Caco-2 (cell line): ENCODE measurements at regions of chr9 and their contacts with region 1.

Region 1: DNA sequence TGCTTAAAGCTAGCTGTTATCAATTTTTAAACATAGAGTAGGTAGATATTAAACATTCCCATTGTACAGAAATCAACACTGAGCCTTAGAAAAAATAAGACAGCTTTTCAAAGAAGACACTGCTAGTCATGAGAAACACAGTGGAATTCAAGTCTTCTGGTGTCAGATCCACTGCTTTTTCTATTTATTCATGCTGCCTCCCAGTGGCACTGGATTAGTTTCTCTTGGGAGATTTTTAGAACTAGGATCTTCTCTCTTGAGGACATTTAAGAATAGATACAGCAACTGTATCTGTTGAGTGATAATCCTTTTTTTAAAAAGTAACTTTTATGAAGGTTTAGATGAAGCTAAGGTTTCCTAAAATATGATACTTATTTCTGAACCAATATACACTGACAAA is 1635.4 kb upstream of the C9orf72 start:
- DNase-seq: no peak
- H3K4me3 ChIP-seq: no peak overlapping the region
- H3K4me3 Mint-ChIP-seq: no peak overlapping the region
- H3K27ac Mint-ChIP-seq: no peak overlapping the region
- H3K4me1 ChIP-seq: no peaks in the 10 kb centered on the region
- H3K4me1 Mint-ChIP-seq: peaks cover under 1% of the 10 kb centered on the region
- H3K27me3 ChIP-seq: no peaks in the 10 kb centered on the region
- H3K27me3 Mint-ChIP-seq: peaks cover 4% of the 10 kb centered on the region
- CTCF ChIP-seq: no peak

Region 2: DNA sequence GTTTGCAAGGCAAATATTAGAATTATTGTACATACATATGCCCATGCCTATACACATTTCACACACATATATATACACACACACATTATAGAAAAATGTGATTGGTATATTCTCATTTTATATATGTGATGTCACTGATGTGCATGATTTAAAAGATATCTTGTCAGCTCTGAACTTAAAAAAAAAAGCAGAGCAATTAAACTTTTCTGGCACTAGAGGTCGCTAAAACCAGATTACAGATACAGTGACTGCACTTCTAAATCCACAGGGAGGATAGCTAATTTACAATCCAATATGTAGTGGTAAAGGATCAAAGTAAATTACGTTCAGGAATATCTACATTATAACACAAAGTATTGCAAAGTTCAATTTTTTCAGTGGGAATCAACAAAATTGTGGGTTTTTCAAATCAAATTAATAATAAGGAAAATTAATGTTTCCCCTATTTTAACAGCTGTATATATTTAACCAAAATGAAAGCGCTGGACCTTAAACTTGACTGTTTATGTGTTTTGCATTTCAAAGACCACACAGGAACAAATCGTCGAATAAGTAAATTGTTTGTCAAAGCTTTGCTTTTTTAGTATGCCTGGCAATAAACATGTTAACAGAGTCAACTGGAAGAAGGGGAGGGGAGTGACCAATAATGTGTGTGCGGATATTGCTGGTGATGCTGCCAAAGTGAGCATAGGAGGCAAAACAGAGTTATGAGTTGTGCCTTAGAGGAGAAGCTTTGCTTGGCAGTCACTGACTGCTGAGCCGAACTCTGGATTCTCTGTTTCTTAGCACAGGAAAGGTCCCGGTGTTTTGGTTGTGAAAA is 434.0 kb before region 1 on chr9:
- CTCF ChIA-PET with region 1: no interaction called
- POLR2A ChIA-PET with region 1: no interaction called
- intact Hi-C with region 1: loop called (anchors 10 kb)
- DNase-seq: peak in 1 of 2 experiments; percentile 1
- H3K4me3 ChIP-seq: no peak overlapping the region
- H3K4me3 Mint-ChIP-seq: no peak overlapping the region
- H3K27ac Mint-ChIP-seq: no peak overlapping the region
- H3K4me1 ChIP-seq: no peaks in the 10 kb centered on the region
- H3K4me1 Mint-ChIP-seq: no peaks in the 10 kb centered on the region
- H3K27me3 ChIP-seq: no peaks in the 10 kb centered on the region
- H3K27me3 Mint-ChIP-seq: peaks cover 3% of the 10 kb centered on the region
- CTCF ChIP-seq: peak; percentile 34 to 38

Region 3: GRCh38 chr9:28841775-28842174 is 366.9 kb before region 1 on chr9:
- CTCF ChIA-PET with region 1: no interaction called
- POLR2A ChIA-PET with region 1: no interaction called
- intact Hi-C with region 1: no loop called
- DNase-seq: no peak
- H3K4me3 ChIP-seq: no peak overlapping the region
- H3K4me3 Mint-ChIP-seq: no peak overlapping the region
- H3K27ac Mint-ChIP-seq: no peak overlapping the region
- H3K4me1 ChIP-seq: no peaks in the 10 kb centered on the region
- H3K4me1 Mint-ChIP-seq: no peaks in the 10 kb centered on the region
- H3K27me3 ChIP-seq: no peaks in the 10 kb centered on the region
- H3K27me3 Mint-ChIP-seq: peaks cover 3% of the 10 kb centered on the region
- CTCF ChIP-seq: no peak

Region 4: DNA sequence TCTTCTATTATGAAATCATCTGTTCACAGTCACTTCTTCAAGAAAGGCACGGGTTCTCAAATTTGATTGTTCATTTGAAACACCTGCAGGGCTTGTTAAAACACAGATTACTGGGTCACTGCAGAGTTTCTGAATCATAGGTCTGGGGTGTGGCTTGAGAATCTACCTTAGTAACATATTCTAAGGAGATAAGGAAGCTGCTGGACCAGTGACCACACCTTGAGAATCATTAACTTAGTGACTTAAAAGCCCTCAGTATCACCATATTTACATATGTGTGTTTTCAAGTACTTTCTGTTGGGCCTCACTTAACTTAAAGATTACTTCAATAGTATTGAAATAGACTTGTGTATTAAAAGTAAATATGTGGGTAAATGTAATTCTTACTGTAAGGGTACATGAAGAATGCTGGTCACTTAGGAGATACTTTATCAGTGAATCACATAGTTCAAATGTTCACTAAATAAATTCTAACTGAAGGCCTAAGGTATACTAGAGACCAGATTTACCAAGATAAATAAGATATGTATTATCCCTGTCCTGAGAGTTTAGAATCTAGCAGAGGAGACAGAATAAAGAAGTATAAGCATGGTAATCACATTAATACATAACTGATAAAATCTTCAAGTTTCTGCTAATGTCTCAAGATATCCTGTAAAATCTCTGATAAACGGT is 293.3 kb before region 1 on chr9:
- CTCF ChIA-PET with region 1: no interaction called
- POLR2A ChIA-PET with region 1: no interaction called
- intact Hi-C with region 1: loop called (anchors 10 kb)
- DNase-seq: peak; percentile 47 to 51
- H3K4me3 ChIP-seq: no peak overlapping the region
- H3K4me3 Mint-ChIP-seq: no peak overlapping the region
- H3K27ac Mint-ChIP-seq: peak overlapping the region; percentile 81
- H3K4me1 ChIP-seq: peaks cover 26% of the 10 kb centered on the region
- H3K4me1 Mint-ChIP-seq: peaks cover 9% of the 10 kb centered on the region
- H3K27me3 ChIP-seq: no peaks in the 10 kb centered on the region
- H3K27me3 Mint-ChIP-seq: no peaks in the 10 kb centered on the region
- CTCF ChIP-seq: no peak

Region 5: DNA sequence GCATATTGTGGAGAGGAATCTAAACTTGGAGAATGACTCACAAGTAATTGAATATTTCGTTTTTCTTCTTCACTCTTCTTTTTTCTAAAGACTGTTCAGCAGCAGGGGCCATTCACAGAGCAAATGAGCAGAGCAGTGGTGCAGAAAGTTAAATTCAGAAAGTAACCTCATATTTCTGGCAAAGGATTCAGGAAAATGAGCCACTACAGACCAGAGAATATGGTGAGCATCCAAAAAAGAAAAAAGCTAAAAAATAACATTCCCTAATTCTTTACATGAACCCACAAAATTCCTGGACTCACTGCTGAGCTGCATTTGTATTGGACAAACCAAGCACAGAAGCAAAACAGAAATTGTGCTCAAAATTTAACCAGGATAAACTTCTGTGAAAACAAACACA is 148.6 kb before region 1 on chr9:
- CTCF ChIA-PET with region 1: no interaction called
- POLR2A ChIA-PET with region 1: no interaction called
- intact Hi-C with region 1: no loop called
- DNase-seq: no peak
- H3K4me3 ChIP-seq: no peak overlapping the region
- H3K4me3 Mint-ChIP-seq: no peak overlapping the region
- H3K27ac Mint-ChIP-seq: no peak overlapping the region
- H3K4me1 ChIP-seq: no peaks in the 10 kb centered on the region
- H3K4me1 Mint-ChIP-seq: no peaks in the 10 kb centered on the region
- H3K27me3 ChIP-seq: no peaks in the 10 kb centered on the region
- H3K27me3 Mint-ChIP-seq: peaks cover 3% of the 10 kb centered on the region
- CTCF ChIP-seq: no peak

Region 6: DNA sequence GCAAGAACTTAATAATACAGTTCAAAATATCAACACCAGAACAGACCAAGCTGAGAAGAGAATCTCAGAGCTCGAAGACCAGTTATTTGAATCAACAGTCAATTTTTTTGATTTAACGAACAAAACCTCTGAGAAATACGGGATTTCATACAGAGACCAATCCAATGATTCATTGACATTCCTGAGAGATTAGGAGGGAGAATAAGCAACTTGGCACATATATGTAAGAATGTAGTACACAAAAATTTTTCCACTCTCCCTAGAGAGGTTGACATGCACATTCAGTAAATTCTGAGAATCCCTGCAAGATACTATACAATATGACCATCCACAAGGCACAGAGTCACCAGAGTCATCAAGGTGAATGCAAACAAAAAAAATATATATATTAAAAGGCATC is 58.1 kb before region 1 on chr9:
- CTCF ChIA-PET with region 1: no interaction called
- POLR2A ChIA-PET with region 1: no interaction called
- intact Hi-C with region 1: no loop called
- DNase-seq: no peak
- H3K4me3 ChIP-seq: no peak overlapping the region
- H3K4me3 Mint-ChIP-seq: no peak overlapping the region
- H3K27ac Mint-ChIP-seq: no peak overlapping the region
- H3K4me1 ChIP-seq: no peaks in the 10 kb centered on the region
- H3K4me1 Mint-ChIP-seq: no peaks in the 10 kb centered on the region
- H3K27me3 ChIP-seq: no peaks in the 10 kb centered on the region
- H3K27me3 Mint-ChIP-seq: no peaks in the 10 kb centered on the region
- CTCF ChIP-seq: no peak

Region 7: DNA sequence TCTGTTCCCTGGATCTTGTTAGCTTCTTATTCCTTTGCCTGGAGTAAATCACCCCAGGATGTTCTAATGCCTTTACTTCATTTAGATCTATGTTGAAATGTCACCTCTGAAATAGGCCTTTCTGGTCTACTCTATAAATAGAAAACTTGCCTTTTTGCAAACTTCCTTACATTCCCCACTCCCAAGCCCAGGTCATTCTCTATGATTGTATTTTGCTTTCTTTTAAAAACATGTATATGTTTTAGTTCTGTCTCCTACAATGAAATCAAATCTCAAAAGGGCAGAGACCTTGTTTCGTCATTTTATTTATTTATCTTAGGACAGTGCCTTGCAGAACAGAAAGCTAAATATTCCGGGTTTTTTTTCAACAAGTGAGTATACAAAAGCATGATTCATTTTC is 22.3 kb after region 1 on chr9:
- CTCF ChIA-PET with region 1: no interaction called
- POLR2A ChIA-PET with region 1: no interaction called
- intact Hi-C with region 1: no loop called
- DNase-seq: no peak
- H3K4me3 ChIP-seq: no peak overlapping the region
- H3K4me3 Mint-ChIP-seq: no peak overlapping the region
- H3K27ac Mint-ChIP-seq: no peak overlapping the region
- H3K4me1 ChIP-seq: no peaks in the 10 kb centered on the region
- H3K4me1 Mint-ChIP-seq: no peaks in the 10 kb centered on the region
- H3K27me3 ChIP-seq: no peaks in the 10 kb centered on the region
- H3K27me3 Mint-ChIP-seq: no peaks in the 10 kb centered on the region
- CTCF ChIP-seq: no peak